ENCODE measurements at regions of chr1 and their contacts with region 1.

Region 1: GRCh38 chr1:84795966-84796600 is 96.9 kb downstream of the LPAR3 start:
- DNase-seq: no peak
- ATAC-seq: peak in 4 of 8 donors; percentile 34 to 57 (median 40)
- H3K4me3 ChIP-seq: no peak overlapping the region
- H3K27ac ChIP-seq: peak overlapping the region in 1 of 10 donors; percentile 45
- H3K4me1 ChIP-seq: peaks cover 0 to 6% (median 0%) of the 10 kb centered on the region in 9 donors
- H3K27me3 ChIP-seq: no peaks in the 10 kb centered on the region
- CTCF ChIP-seq: no peak

Region 2: DNA sequence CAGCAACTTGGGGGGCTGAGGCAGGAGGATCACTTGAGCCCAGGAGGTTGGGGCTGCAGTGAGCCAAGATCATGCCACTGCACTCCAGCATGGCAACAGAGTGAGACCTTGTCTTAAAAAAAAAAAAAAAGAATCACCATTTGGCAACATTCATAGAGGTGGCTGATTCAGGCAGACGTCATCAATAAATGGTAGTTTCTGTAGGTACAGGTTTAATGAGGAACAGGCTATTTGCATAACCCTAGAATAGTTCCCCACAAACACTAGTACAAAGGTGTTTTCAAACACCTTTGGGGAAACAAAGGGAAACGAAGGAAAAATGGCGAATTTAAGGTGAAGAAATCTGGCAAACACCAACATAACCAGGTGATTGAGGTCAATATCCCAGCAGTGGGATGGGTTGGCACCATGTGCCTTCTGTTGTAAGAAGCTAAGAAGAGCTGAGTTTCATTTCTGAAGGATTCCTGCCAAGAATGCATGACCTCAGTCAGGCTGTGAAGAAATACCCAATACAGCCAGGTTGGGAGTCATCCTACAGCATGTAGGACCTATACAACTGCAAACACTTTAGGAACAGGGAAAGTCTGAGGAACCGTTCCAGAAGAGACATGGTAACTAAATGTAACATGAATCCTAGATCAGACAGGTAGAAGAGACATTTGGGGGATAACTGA is 91.3 kb after region 1 on chr1:
- intact Hi-C with region 1: loop called in 4 of 10 experiments (anchors 5 to 10 kb)
- DNase-seq: no peak
- ATAC-seq: no peak
- H3K4me3 ChIP-seq: no peak overlapping the region
- H3K27ac ChIP-seq: no peak overlapping the region
- H3K4me1 ChIP-seq: peaks cover 0 to 15% (median 4%) of the 10 kb centered on the region in 9 donors
- H3K27me3 ChIP-seq: peaks cover 0 to 13% (median 7%) of the 10 kb centered on the region in 7 donors
- CTCF ChIP-seq: no peak

Region 3: DNA sequence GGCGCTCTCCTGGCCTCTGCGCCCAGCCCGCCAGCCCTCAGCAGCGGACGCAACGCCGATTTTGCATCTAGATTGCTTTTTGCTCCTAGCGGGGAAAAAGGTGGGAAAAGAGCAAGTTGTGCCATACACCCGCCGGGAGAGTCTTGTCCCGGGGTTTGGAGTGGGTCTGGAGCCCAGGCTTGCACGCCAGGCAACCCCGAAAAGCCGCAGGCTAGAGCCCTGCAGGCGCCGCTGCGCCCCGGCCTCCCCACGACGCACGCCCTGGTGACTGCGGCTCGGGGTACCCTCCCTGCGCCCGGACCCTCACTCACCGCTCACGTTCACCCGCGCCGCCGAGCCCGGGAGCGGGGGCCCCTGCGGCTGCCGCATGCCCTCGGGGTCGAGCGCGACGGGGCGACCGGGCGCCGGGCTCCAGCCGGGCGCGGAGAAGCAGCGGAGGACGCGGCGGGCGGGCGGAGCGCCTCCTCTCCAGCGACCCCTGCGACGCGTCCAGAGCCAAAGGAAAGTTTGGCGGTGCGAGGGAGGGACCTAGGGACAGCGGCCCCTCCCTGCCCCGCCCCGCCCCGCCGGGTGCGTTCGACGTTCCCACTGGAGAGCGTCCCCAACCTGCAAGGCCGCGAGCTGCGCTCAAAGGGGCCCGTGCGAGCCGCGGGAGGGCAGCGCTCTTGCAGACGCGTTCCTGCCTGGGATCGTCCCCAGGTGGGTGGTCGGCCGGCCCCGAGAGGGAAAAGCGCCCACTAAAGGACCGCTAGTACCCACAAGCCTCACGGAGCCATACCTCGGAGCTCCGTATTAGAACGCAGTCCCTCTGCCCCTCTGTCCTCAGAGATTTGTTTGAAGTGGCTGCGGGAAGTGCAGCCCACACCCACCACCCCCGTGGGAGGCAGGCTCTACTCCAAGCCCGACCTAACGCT is 96.9 kb after region 1 on chr1 and contains the start of gene LPAR3:
- intact Hi-C with region 1: loop called in 4 of 10 experiments (anchors 5 to 10 kb)
- DNase-seq: peak; percentile 20 to 56
- ATAC-seq: peak; percentile 58 to 92 (median 84)
- H3K4me3 ChIP-seq: peak within 1 kb of the TSS; percentile 10 to 56 (median 48)
- H3K27ac ChIP-seq: peak within 1 kb of the TSS in 4 of 10 donors; percentile 5 to 61 (median 38)
- H3K4me1 ChIP-seq: peaks cover 0 to 6% (median 0%) of the 10 kb centered on the region in 9 donors
- H3K27me3 ChIP-seq: peaks cover 0 to 44% (median 27%) of the 10 kb centered on the region in 7 donors
- CTCF ChIP-seq: peak in 3 of 9 donors; percentile 7 to 24 (median 20)
- total RNA-seq, gene LPAR3: 4.9 to 17.3 (median 11.9) TPM

Measured in heart right ventricle (tissue), 16 donors.